ENCODE measurements at regions of chr4 and their contacts with region 1.

Region 1: DNA sequence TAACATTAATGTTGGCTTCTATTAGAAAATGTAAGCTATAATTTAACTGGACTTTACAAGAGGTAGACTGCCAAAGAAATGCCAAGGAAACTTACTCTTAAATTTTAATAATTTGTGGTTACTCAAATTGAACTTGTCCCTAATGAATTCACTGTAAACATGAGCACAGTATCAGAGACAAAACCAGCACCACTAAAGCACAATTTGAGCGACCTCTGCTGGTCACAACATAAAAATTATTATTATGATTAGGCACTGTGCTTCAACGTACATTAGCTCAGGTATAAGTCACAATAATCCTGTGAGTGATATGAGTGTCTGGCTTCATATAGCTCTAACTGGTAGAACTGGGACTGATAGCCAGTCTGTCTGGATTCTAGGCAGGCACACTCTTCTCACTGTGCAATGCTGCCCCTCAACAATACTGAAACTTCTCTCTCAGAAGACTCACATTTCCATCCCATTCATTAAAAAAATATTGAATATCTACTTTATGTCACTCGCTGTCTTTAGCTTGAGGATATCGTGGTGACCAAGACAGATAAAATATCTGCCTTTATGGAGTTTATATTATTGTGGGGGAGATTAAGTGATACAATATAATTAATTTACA is 8.0 kb downstream of the NUDT6 start:
- DNase-seq: peak; percentile 51
- ATAC-seq: peak; percentile 85
- H3K4me3 Mint-ChIP-seq: no peak overlapping the region
- H3K27ac Mint-ChIP-seq: no peak overlapping the region
- H3K4me1 Mint-ChIP-seq: no peaks in the 10 kb centered on the region
- H3K27me3 Mint-ChIP-seq: no peaks in the 10 kb centered on the region

Region 2: GRCh38 chr4:122758033-122758432 is 156.4 kb before region 1 on chr4:
- CTCF ChIA-PET with region 1: interaction called, 54 read pairs
- POLR2A ChIA-PET with region 1: no interaction called
- intact Hi-C with region 1: loop called (anchors 1 kb)
- DNase-seq: no peak
- ATAC-seq: peak; percentile 33
- H3K4me3 Mint-ChIP-seq: no peak overlapping the region
- H3K27ac Mint-ChIP-seq: no peak overlapping the region
- H3K4me1 Mint-ChIP-seq: peaks cover 16% of the 10 kb centered on the region
- H3K27me3 Mint-ChIP-seq: peaks cover 12% of the 10 kb centered on the region

Region 3: GRCh38 chr4:122764821-122765215 is 149.6 kb before region 1 on chr4:
- CTCF ChIA-PET with region 1: interaction called, 54 read pairs
- POLR2A ChIA-PET with region 1: no interaction called
- intact Hi-C with region 1: no loop called
- DNase-seq: no peak
- ATAC-seq: peak; percentile 93
- H3K4me3 Mint-ChIP-seq: no peak overlapping the region
- H3K27ac Mint-ChIP-seq: no peak overlapping the region
- H3K4me1 Mint-ChIP-seq: peaks cover 27% of the 10 kb centered on the region
- H3K27me3 Mint-ChIP-seq: peaks cover 2% of the 10 kb centered on the region

Region 4: DNA sequence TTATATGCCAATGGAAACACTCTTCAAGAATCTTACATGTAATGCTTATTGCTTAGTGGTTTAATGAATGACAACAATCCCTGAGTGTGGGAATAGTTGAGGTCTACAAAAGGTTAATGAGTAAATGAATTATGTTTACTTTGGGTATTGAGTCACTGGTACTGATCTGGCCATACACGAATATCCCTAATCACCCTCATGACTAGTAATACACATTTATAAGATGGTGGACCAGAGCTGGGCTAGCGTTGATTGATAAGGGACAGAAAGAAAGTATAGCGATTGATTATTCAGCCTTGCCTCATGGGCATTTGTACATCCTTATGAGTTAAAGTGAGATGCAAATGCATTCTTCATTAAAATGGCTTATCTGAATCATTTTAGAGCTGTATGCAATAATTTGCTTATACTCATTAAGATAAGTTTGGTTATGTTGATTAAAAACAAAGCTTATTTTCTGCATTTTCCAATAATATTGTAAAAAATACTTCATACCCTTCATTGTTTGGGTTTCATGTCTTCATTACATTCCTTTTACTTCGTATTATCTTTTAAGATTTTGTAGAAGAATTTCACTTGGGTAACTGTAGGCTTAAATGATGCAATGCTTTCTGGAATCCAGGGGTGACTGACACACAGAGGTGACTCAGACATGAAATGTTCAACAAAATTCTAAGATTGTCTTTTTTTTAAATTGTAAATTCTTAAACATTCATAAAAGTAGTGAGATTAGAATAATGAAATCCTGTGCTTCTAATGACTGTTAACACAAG is 40.4 kb before region 1 on chr4:
- CTCF ChIA-PET with region 1: interaction called, 10 read pairs
- POLR2A ChIA-PET with region 1: no interaction called
- intact Hi-C with region 1: no loop called
- DNase-seq: no peak
- ATAC-seq: no peak
- H3K4me3 Mint-ChIP-seq: no peak overlapping the region
- H3K27ac Mint-ChIP-seq: no peak overlapping the region
- H3K4me1 Mint-ChIP-seq: no peaks in the 10 kb centered on the region
- H3K27me3 Mint-ChIP-seq: peaks cover 36% of the 10 kb centered on the region

Region 5: DNA sequence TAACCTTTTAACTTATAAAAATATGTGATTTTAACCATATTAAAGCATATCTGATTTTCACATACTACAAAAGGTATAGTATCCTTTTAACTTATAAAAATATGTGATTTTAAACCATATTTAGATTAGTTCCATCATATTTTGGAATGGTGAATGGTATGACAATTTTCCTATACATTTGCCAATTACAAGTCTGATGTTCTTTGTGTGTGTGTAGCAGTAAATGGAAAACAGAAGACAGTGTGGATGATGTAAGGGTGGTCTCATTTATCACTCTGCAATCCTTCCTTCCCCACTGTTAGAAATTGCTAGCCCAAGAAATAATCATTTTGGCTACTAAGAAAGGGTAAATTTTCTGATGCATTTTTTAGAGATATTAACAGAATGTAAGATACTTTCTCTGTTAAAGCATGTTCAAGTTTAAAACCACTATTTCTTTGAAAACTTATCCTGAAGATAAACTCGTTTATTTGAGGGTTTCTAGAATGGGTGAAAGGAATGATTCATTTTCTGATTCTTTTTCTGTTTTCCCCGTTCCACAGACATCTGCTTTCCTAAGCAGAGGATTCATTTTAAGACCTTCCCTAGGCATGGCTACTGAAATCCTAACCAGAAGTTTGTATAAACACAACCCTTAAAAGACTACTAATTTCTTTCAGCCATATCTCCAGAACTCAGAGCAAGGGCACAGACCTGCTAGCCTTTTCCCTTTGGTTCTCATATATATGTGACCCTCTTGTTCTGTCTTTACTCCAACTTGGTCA is 13.0 kb before region 1 on chr4:
- CTCF ChIA-PET with region 1: interaction called, 25 read pairs
- POLR2A ChIA-PET with region 1: no interaction called
- intact Hi-C with region 1: no loop called
- DNase-seq: no peak
- ATAC-seq: no peak
- H3K4me3 Mint-ChIP-seq: no peak overlapping the region
- H3K27ac Mint-ChIP-seq: no peak overlapping the region
- H3K4me1 Mint-ChIP-seq: no peaks in the 10 kb centered on the region
- H3K27me3 Mint-ChIP-seq: no peaks in the 10 kb centered on the region

Region 6: GRCh38 chr4:122930862-122931261 is 16.5 kb after region 1 on chr4:
- CTCF ChIA-PET with region 1: interaction called, 13 read pairs
- POLR2A ChIA-PET with region 1: no interaction called
- intact Hi-C with region 1: no loop called
- DNase-seq: no peak
- ATAC-seq: no peak
- H3K4me3 Mint-ChIP-seq: no peak overlapping the region
- H3K27ac Mint-ChIP-seq: no peak overlapping the region
- H3K4me1 Mint-ChIP-seq: peaks cover 5% of the 10 kb centered on the region
- H3K27me3 Mint-ChIP-seq: no peaks in the 10 kb centered on the region

Region 7: DNA sequence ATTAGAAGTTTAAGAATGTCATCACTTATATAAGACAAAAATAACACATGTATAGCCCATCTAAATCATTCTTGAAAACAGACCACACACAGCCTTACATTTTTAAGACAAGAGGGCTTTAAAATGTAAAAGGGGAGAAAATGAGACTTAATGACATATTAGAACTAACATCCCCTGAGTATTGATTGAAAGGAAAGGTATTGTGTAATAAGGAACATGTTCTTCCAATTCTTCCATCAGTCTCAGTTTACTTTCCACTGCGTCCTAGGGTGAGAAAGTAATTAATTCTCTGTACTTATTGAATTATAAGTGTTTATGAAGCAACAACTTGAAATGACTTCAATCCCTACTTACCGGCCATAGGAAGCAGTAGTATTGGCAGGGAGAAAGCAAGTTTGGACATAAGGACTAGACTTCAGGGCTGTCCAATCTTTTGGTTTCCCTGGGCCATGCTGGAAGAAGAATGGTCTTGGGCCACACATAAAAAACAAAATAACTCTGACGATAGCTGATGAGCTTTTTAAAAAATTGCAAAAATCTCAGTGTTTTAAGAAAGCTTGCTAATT is 279.5 kb after region 1 on chr4:
- CTCF ChIA-PET with region 1: no interaction called
- POLR2A ChIA-PET with region 1: no interaction called
- intact Hi-C with region 1: no loop called
- DNase-seq: no peak
- ATAC-seq: no peak
- H3K4me3 Mint-ChIP-seq: no peak overlapping the region
- H3K27ac Mint-ChIP-seq: no peak overlapping the region
- H3K4me1 Mint-ChIP-seq: no peaks in the 10 kb centered on the region
- H3K27me3 Mint-ChIP-seq: no peaks in the 10 kb centered on the region

Region 8: DNA sequence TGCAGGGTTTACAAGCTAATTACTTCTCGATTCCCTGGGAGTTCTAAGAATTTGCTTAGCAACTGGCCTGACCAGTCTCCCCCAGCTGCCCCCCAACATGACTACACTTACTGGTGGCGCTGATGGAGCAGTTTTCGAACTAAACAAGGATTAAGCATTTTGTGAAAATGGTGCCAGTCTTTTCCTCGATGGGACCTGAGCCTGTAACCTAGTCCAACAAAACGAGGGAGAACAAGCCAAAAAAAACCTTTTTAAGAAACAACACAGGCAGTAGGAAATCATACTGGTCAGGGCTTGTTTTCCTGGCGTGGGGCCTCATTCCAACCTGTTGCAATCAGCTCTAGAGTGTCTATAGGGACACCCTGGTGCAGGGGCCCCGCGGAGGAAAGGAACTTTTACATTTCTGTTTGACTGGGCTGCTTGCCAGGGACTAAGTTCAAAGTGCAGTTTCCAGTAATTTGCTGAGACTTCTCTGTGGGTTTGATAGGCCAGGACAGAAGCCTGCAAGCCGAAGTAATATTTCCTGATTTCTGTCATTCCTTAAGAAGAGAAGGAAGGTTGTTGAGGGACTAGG is 640.9 kb after region 1 on chr4:
- CTCF ChIA-PET with region 1: no interaction called
- POLR2A ChIA-PET with region 1: no interaction called
- intact Hi-C with region 1: no loop called
- DNase-seq: no peak
- ATAC-seq: no peak
- H3K4me3 Mint-ChIP-seq: no peak overlapping the region
- H3K27ac Mint-ChIP-seq: no peak overlapping the region
- H3K4me1 Mint-ChIP-seq: no peaks in the 10 kb centered on the region
- H3K27me3 Mint-ChIP-seq: peaks cover 2% of the 10 kb centered on the region